Caco-2 (cell line): ENCODE measurements at regions of chr10 and their contacts with region 1.

Region 1: DNA sequence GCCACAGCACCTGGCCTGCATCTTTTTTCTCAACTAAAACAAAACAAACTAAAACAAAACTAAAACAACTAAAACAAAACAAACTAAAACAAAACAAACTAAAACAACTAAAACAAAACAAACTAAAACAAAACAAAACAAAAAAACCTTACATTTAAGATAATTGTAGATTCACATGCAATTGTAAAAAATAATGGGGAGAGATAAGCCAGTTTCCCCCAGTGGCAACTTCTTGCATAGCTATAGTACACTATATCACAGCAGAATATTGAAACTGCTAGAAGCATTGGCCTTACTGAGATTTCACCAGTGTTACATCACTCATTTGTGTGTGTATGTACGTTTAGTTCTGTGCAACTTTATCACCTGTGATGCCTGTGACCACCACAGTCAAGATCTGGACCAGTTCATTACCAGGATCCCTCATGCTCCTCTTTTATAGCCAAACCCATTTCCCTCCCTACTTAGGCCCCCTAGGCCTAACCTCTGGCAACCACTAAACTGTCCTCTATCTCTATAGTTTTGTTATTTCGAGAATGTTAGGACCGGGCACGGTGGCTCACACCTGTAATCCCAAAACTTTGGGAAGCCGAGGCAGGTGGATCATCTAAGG is 9.3 kb downstream of the FXYD4 start:
- DNase-seq: peak in 1 of 2 experiments; percentile 80
- H3K4me3 ChIP-seq: no peak overlapping the region
- H3K4me3 Mint-ChIP-seq: no peak overlapping the region
- H3K27ac Mint-ChIP-seq: peak overlapping the region; percentile 94
- H3K4me1 ChIP-seq: peaks cover 45% of the 10 kb centered on the region
- H3K4me1 Mint-ChIP-seq: peaks cover 52% of the 10 kb centered on the region
- H3K27me3 ChIP-seq: no peaks in the 10 kb centered on the region
- H3K27me3 Mint-ChIP-seq: no peaks in the 10 kb centered on the region
- CTCF ChIP-seq: peak in 1 of 2 experiments; percentile 34

Region 2: GRCh38 chr10:43361986-43362839 is 18.5 kb before region 1 on chr10:
- CTCF ChIA-PET with region 1: no interaction called
- POLR2A ChIA-PET with region 1: interaction called, 4 read pairs
- intact Hi-C with region 1: loop called (anchors 1 kb)
- DNase-seq: peak; percentile 99
- H3K4me3 ChIP-seq: peak overlapping the region; percentile 66
- H3K4me3 Mint-ChIP-seq: peak overlapping the region; percentile 98
- H3K27ac Mint-ChIP-seq: peak overlapping the region; percentile 71
- H3K4me1 ChIP-seq: peaks cover 11% of the 10 kb centered on the region
- H3K4me1 Mint-ChIP-seq: peaks cover 16% of the 10 kb centered on the region
- H3K27me3 ChIP-seq: no peaks in the 10 kb centered on the region
- H3K27me3 Mint-ChIP-seq: no peaks in the 10 kb centered on the region
- CTCF ChIP-seq: peak; percentile 68 to 83

Region 3: GRCh38 chr10:43402880-43403452 is 22.2 kb after region 1 on chr10:
- CTCF ChIA-PET with region 1: no interaction called
- POLR2A ChIA-PET with region 1: no interaction called
- intact Hi-C with region 1: no loop called
- DNase-seq: no peak
- H3K4me3 ChIP-seq: no peak overlapping the region
- H3K4me3 Mint-ChIP-seq: no peak overlapping the region
- H3K27ac Mint-ChIP-seq: peak overlapping the region; percentile 33
- H3K4me1 ChIP-seq: peaks cover 73% of the 10 kb centered on the region
- H3K4me1 Mint-ChIP-seq: peaks cover 36% of the 10 kb centered on the region
- H3K27me3 ChIP-seq: no peaks in the 10 kb centered on the region
- H3K27me3 Mint-ChIP-seq: no peaks in the 10 kb centered on the region
- CTCF ChIP-seq: no peak

Region 4: GRCh38 chr10:43430926-43431663 is 50.4 kb after region 1 on chr10:
- CTCF ChIA-PET with region 1: no interaction called
- POLR2A ChIA-PET with region 1: interaction called, 11 read pairs
- intact Hi-C with region 1: no loop called
- DNase-seq: no peak
- H3K4me3 ChIP-seq: no peak overlapping the region
- H3K4me3 Mint-ChIP-seq: no peak overlapping the region
- H3K27ac Mint-ChIP-seq: no peak overlapping the region
- H3K4me1 ChIP-seq: peaks cover 5% of the 10 kb centered on the region; the same call in 1 of the 2 replicates
- H3K4me1 Mint-ChIP-seq: no peaks in the 10 kb centered on the region
- H3K27me3 ChIP-seq: no peaks in the 10 kb centered on the region
- H3K27me3 Mint-ChIP-seq: no peaks in the 10 kb centered on the region
- CTCF ChIP-seq: no peak